Activated CD4-positive, alpha-beta T cell treated with anti-CD3 and anti-CD28 coated beads, Interleukin-2, amount 10 ng/mL, durations not matched to agents 24 days and 14 days (primary cell): ENCODE measurements at regions of chr2 and their contacts with region 1.

Region 1: DNA sequence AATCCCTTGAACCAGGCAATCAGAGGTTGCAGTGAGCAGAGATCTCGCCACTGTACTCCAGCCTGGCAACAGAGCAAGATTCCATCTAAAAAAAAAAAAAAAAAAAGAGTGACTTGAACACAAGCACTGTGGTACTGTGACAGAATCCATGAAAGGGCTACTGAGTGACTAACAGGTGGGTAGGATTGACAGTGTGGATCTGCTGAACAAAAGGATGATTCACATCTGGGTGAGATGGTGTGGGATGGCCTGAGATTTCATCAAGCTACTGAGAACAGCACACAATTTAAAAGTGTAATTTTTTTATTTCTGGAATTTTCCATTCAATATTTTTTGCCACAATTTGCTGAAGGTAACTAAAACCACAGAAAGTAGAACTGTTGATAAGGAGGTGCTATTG is 13.3 kb upstream of the SP3 start:
- DNase-seq: no peak
- H3K4me3 Mint-ChIP-seq: no peak overlapping the region
- H3K27ac Mint-ChIP-seq: peak overlapping the region; percentile 35
- H3K4me1 Mint-ChIP-seq: peaks cover 23% of the 10 kb centered on the region
- H3K27me3 Mint-ChIP-seq: no peaks in the 10 kb centered on the region

Region 2: GRCh38 chr2:174023591-174024523 is 45.4 kb after region 1 on chr2:
- intact Hi-C with region 1: loop called (anchors 5 kb)
- DNase-seq: no peak
- H3K4me3 Mint-ChIP-seq: no peak overlapping the region
- H3K27ac Mint-ChIP-seq: no peak overlapping the region
- H3K4me1 Mint-ChIP-seq: peaks cover 6% of the 10 kb centered on the region
- H3K27me3 Mint-ChIP-seq: peaks cover 3% of the 10 kb centered on the region